Stomach (tissue), 19 donors: ENCODE measurements at regions of chr7 and their contacts with region 1.

Region 1: DNA sequence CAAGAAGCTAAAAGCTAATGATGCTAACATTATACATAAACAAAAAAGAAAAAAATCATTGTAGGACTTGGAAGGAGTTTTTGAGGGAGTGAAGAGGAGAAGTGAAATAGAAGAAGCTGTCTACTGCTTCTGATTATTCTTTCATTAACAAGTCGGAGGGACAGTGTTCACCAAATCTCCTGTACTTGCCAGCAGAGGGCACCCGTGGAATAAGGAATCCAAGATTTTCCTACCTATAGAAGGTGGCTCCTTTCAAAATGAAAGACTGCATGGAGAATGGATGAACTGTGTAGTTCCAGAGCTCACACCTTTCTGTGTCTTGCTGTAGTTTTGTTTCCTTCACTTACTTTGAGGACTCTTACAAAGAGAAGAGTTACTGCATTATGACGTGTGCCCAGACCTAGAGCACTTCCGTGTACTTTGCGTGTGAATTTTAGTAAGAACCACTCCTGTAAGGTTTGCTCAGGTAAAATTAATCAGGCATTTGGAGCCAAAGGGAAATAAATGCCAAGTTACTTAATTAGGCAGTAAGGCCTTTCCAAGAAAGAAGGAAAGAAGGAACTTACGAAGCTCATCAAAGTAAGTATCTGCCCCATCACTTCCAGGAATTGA is 145.1 kb downstream of the SEMA3D start:
- DNase-seq: peak; percentile 82 to 89
- H3K4me3 ChIP-seq: peak overlapping the region in 1 of 4 donors; percentile 4
- H3K27ac ChIP-seq: no peak overlapping the region
- H3K4me1 ChIP-seq: peaks cover 0 to 5% (median 4%) of the 10 kb centered on the region in 4 donors
- H3K27me3 ChIP-seq: no peaks in the 10 kb centered on the region
- CTCF ChIP-seq: peak in 5 of 7 experiments; percentile 29 to 78 (median 54)
- EP300 ChIP-seq: no peak
- POLR2A ChIP-seq: no peak

Region 2: DNA sequence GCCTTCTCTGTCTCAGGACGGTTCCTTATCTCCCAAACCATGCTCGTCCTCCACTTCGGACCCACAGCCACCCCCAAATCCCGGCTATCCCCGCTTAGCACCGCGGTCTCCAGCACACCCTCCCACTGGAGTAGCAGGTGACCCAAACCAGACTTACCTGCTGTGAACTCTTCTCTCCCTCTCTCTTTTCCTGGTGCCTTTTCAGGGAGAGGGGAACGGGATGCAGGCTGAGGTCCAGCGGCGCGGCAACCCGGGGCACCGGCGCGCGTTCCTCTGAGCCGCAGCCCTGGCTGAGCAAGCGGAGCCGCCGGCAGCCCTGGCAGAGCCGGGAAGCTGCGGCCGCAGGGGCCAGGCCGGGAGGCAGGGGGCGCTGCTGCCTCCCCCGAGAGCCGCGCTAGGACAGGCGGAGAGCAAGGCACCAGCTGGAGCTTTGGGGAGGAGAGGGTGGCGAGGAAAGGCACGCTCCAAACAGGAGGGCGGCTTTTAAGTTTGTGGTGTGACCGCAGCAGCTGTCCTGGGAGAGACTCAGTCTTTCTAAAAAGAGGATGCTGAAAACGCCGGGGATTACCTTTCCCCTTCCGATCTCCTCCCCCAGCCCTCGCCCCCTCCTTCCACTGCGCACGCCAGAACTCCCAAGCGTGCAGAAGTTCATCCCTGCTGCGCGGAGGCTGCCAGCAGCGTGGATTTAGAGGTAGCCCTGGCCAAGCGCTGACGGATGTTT is 145.0 kb after region 1 on chr7 and contains the start of gene SEMA3D:
- intact Hi-C with region 1: loop called (anchors 10 kb)
- DNase-seq: peak; percentile 78 to 96
- H3K4me3 ChIP-seq: peak within 1 kb of the TSS; percentile 56 to 68 (median 62)
- H3K27ac ChIP-seq: peak within 1 kb of the TSS; percentile 43 to 80 (median 72)
- H3K4me1 ChIP-seq: peaks cover 7 to 32% (median 24%) of the 10 kb centered on the region in 4 donors
- H3K27me3 ChIP-seq: peaks cover 0 to 26% (median 15%) of the 10 kb centered on the region in 3 donors
- CTCF ChIP-seq: peak in 5 of 7 experiments; percentile 62 to 82 (median 74)
- EP300 ChIP-seq: no peak
- POLR2A ChIP-seq: no peak
- total RNA-seq, gene SEMA3D: 2.6 to 20.9 (median 2.9) TPM in 4 of 5 donors, not detected in the other

Region 3: DNA sequence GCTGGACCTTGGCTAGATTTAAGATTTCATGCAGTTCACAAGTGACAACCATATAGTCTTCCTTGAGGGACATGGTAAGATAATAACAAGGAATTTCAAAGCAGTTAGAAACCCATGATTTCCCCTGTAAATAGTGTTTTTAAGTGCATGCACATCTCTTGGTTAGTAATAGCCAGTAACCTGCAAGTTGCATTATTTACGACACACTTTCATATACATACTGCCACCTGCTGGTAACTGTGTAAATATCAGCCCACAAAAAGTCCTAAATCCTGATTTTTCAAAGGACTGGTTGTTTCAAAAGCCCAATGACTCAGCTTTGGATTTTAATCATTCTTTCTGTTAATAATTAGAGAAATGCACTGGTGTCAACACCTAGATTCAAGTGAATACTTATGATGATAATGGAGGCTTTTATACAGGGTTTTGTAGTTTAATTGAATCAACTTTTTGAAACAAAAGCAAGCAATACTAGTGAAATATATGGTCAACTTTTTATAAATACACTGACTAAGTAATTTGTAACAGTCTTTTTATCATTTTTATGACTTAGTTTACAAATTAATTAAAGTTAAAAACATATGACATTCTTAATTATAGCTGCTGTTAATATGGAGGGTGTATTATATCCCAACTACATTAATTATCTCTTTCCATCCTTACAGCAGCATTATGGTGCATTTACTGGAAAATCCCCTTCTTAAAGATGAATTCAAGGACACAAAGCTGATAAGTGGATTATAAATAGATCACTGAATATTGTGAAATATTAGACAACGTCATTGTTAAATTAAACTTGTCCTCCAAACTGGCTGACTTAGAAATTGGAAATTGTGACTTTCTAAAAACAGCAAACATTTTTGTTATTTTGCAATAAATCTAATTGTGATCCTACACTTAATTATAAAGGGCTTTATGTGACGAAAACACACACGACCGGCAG is 512.8 kb after region 1 on chr7:
- intact Hi-C with region 1: loop called (anchors 10 kb)
- DNase-seq: peak in 1 of 2 donors; percentile 82
- H3K4me3 ChIP-seq: no peak overlapping the region
- H3K27ac ChIP-seq: no peak overlapping the region
- H3K4me1 ChIP-seq: no peaks in the 10 kb centered on the region
- H3K27me3 ChIP-seq: no peaks in the 10 kb centered on the region
- CTCF ChIP-seq: peak in 5 of 7 experiments; percentile 50 to 76 (median 70)
- EP300 ChIP-seq: no peak
- POLR2A ChIP-seq: no peak